ENCODE measurements at regions of chr6 and their contacts with region 1.

Region 1: GRCh38 chr6:71509191-71510005 is 220.8 kb downstream of the OGFRL1 start:
- DNase-seq: no peak
- ATAC-seq: no peak

Region 2: DNA sequence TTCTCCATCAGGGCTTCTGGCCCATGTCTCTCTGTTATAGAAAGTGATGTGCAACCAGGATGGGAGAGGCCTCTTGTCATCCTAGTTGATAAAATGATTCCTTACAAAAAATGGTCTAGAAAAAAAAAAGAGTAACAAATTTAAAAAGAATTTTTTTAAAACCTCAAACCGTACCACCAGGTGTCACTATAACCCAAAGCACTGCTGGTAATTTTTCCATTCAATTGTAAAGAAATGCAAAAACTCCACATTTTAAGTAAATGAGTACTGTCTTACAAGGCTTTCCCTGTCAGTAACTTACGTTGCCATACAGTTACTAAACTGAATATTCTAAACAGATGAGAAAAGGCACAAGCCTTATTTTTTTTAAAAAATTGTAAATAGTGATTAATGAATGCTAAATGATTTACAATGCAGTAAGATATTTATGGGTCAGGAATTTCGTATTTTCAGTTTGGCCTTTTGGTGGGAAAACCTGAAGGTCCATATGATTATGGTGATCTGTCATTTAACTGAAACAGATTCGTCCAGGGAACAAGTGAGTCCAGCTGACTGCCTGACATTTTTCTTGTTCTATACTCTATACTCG is 125.4 kb before region 1 on chr6:
- intact Hi-C with region 1: loop called (anchors 10 kb)
- DNase-seq: no peak
- ATAC-seq: no peak

Region 3: DNA sequence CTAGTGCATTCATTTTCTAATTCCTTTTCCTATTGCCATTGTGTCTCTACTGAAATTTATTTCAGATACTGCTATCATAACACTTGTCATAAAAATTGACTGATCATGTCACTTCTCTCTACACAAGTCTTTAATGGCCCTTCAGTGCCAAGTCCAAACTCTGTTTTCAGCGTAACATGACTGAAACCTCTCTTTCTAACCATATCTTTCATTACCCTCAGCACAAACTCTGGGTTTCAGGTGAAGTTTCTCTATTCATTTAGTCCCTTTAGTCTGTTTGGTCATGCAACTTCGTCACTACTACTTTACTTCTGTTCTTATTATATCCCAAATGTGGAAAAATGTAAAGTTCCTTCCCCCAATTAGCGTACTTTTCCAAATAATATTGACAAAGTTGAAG is 14.2 kb after region 1 on chr6:
- intact Hi-C with region 1: no loop called
- DNase-seq: no peak
- ATAC-seq: no peak

Measured in sciatic nerve (tissue), 2 donors.